Posterior vena cava (tissue), 2 donors: ENCODE measurements at regions of chr18 and their contacts with region 1.

Region 1: GRCh38 chr18:78330761-78331160 is 648.9 kb upstream of the SALL3 start:
- DNase-seq: no peak

Region 2: GRCh38 chr18:77754475-77755044 is 576.2 kb before region 1 on chr18:
- intact Hi-C with region 1: loop called in 1 of 2 experiments (anchors 5 kb)
- DNase-seq: no peak

Region 3: GRCh38 chr18:78138983-78139496 is 191.7 kb before region 1 on chr18:
- intact Hi-C with region 1: no loop called
- DNase-seq: no peak

Region 4: DNA sequence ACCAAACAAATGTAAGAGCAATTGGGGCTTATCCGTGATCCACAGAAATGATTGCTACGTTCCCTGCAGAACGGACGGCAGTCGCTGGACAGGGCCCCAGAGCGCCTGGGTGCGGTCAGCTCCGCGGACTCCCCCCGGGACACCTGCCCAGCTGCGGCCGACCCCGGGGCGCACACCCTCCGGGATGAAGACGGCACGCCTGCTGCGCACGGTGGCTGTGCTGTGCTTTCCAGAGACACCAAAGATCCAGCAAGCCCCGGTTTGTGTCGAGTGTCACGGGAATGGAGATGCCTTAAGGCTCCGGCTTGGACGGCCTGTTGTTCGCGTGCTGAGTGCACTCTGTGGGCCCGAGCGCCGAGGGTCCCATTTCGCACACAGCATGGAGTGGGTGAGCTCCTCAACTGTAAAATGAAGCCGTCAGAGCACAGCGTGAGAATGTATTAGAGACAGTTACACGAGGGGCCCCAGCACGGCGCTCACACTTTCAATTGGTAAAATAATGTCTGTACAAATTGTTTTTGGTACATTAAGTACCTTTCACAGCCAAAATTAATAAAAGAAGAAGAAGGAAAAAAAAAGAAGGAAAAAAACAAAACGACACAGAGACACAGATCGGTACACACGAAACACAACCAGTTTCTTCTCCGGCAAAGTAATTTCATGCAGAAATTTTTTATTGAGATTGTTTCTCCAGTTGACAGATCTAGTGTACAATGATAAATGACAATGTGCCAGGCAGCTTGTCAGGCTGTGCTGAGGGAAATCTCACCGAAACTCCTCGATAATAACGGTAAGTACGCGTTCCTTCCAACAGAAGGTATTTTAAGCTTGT is 33.0 kb after region 1 on chr18:
- intact Hi-C with region 1: loop called in 1 of 2 experiments (anchors 1 kb)
- DNase-seq: no peak